Mammary epithelial cell (primary cell): ENCODE measurements at regions of chr5 and their contacts with region 1.

Region 1: DNA sequence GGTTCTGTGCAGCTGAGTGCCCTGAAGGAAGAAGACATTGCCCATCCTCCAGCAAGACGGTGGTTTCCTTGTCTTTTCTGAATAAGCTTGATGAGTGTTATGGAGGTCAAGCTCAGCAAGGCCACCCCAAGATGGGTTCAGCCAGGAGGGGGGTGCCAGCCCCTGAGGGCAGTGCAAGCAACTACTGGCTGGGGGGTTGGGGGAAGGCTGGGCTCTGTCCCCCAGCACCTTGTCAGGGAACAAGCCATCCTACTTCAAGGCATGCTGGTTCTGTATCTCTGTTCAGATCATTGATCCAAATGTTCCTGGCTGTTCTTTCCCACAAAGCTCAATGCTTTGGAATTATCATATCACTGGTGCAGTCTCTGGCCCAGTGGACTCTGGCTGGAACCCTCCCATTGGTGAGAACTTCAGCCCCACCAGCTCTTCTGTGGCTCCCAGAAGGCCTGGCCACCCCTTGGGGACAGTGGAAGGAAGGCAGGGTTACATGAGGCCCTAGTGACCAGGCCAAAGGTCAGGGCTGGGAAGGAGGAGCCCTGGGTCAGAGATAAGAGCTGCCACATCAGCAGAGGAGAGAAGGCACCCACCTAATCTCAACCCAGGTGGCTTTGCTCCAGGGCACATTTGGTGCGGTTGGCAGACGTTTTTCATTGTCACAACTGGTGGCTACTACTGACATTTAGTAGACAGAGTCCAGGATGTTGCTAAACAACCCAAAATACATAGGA is 280.2 kb downstream of the IRX2 start:
- DNase-seq: no peak
- H3K4me3 ChIP-seq: no peak overlapping the region
- H3K27ac ChIP-seq: no peak overlapping the region
- H3K4me1 ChIP-seq: no peaks in the 10 kb centered on the region
- H3K27me3 ChIP-seq: no peaks in the 10 kb centered on the region
- CTCF ChIP-seq: no peak

Region 2: GRCh38 chr5:2569176-2570157 is 98.2 kb after region 1 on chr5:
- CTCF ChIA-PET with region 1: no interaction called
- dilution Hi-C with region 1: loop called (anchors 5 kb)
- in situ Hi-C with region 1: no loop called
- intact Hi-C with region 1: no loop called
- DNase-seq: no peak
- H3K4me3 ChIP-seq: no peak overlapping the region
- H3K27ac ChIP-seq: no peak overlapping the region
- H3K4me1 ChIP-seq: no peaks in the 10 kb centered on the region
- H3K27me3 ChIP-seq: no peaks in the 10 kb centered on the region
- CTCF ChIP-seq: no peak